ENCODE measurements at regions of chr19 and their contacts with region 1.

Region 1: GRCh38 chr19:4791170-4792018 is at the start of gene FEM1A:
- DNase-seq: peak; percentile 99 to 100
- H3K4me3 ChIP-seq: peak within 1 kb of the TSS; percentile 74 to 91 (median 85)
- H3K27ac ChIP-seq: peak within 1 kb of the TSS; percentile 89 to 93
- H3K4me1 ChIP-seq: peaks cover 3 to 12% of the 10 kb centered on the region in 2 donors
- H3K27me3 ChIP-seq: no peaks in the 10 kb centered on the region
- CTCF ChIP-seq: peak; percentile 99 to 100 (median 99)
- POLR2A ChIP-seq: peak; percentile 74
- total RNA-seq, gene FEM1A: 10.4 to 17.6 (median 12.5) TPM

Region 2: GRCh38 chr19:4732680-4733114 is 58.7 kb before region 1 on chr19:
- intact Hi-C with region 1: loop called (anchors 5 kb)
- DNase-seq: no peak
- H3K4me3 ChIP-seq: peak overlapping the region in 1 of 3 donors; percentile 21
- H3K27ac ChIP-seq: no peak overlapping the region
- H3K4me1 ChIP-seq: no peaks in the 10 kb centered on the region
- H3K27me3 ChIP-seq: peaks cover 0 to 4% of the 10 kb centered on the region in 2 donors
- CTCF ChIP-seq: peak; percentile 34 to 84 (median 50)
- POLR2A ChIP-seq: no peak